Thyroid gland (tissue), 4 donors: ENCODE measurements at regions of chr18 and their contacts with region 1.

Region 1: DNA sequence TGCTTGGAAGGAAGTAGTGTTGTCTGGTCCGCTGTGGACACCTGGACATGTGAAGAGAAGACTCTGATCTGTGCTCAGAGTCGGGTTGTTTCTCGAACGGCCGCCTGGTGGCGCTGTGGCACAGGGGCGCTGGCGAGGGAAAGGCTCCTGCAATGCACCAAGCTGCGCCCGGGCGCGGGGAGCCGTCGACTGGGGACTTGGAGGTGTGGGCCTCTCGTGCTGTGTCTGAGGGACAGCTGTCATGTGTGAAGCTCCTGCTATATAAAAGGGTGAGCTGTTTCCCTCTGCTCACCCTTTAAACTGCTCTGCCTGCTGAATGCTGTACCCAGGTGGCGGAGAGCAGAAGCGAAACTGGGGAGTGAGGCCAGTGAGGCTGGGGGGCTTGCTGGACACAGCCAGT is 44.0 kb downstream of the GNAL start:
- DNase-seq: peak; percentile 73 to 79
- H3K4me3 ChIP-seq: no peak overlapping the region
- H3K27ac ChIP-seq: no peak overlapping the region
- H3K4me1 ChIP-seq: no peaks in the 10 kb centered on the region
- H3K27me3 ChIP-seq: no peaks in the 10 kb centered on the region
- CTCF ChIP-seq: peak; percentile 72 to 91 (median 84)
- POLR2A ChIP-seq: no peak

Region 2: DNA sequence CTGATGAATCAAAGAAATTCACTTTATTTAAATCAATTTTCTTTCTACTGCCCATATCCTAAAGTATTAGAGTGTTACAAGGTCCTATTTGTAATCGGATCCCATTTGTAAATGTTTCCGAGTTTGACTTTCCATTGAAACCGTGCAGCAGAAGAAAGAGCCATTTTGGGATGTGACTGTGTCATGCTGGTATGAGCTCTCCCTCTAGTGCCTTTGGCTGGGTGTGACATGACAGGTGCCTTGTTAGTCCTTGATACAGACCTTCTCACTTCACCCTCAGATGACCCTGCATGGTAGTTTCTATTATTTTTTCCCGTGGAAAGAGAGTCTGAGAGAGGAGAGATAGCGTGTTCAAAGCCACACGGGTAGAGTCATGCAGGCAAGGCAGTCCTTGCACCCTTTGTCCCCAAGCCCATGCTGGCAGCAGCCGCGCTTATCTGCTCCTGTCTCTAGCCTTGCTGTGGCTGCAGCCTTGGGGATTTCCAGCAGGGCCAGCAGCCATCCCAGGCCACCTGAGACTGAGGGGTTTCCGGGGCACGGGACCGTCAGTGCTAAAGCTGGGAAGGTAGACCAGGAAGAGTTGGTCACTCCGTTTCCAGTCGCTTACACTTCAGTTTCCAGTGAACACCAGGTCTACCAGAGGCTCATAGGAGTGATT is 139.6 kb after region 1 on chr18:
- intact Hi-C with region 1: loop called (anchors 10 kb)
- DNase-seq: peak; percentile 38 to 53
- H3K4me3 ChIP-seq: no peak overlapping the region
- H3K27ac ChIP-seq: no peak overlapping the region
- H3K4me1 ChIP-seq: no peaks in the 10 kb centered on the region
- H3K27me3 ChIP-seq: no peaks in the 10 kb centered on the region
- CTCF ChIP-seq: peak in 4 of 6 experiments; percentile 42 to 64 (median 56)
- POLR2A ChIP-seq: no peak

Region 3: DNA sequence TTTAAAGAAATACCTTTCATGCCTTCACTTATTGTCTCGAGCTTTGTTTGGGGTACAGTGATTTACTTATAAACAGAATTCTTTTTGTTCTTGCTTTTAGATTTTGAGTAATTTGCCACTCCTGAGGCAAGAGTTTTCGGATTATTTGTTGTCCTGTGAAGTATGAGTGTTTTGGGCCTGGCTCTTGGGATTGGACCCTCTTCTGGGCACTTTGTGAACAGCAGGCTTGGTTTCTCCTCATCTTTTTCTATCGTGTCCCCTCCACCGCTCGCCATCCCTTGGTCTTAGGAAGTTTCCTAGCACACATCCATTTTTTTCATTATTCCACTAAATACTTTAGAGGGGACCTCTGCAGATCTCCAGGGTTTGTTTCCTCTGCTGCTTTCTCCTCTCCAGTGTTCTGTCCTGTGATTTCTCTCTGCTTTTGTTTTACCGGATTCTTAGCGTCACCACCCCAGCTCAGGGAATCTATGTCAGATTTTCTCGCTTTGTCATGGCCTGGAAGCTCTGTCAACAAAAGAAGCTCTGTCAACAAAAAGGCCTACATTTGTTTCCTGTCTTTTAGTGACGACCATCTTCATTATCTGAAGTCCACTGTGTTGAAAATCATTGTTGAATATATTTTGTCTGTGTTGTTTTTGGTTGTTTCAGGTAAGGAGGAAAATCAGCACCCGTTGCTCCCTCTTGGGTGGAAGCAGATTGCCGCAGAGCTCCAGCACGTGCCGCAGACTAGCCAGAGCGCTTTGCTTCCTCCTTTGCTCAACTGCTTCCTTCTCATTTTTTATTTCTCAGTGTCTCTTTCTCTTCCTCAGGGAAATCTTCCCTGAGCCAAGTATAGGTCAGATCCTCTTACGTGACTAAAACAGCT is 388.4 kb after region 1 on chr18:
- intact Hi-C with region 1: no loop called
- DNase-seq: peak in 1 of 2 donors; percentile 13
- H3K4me3 ChIP-seq: no peak overlapping the region
- H3K27ac ChIP-seq: no peak overlapping the region
- H3K4me1 ChIP-seq: no peaks in the 10 kb centered on the region
- H3K27me3 ChIP-seq: no peaks in the 10 kb centered on the region
- CTCF ChIP-seq: peak in 3 of 6 experiments; percentile 18 to 37 (median 29)
- POLR2A ChIP-seq: no peak

Region 4: GRCh38 chr18:12336875-12337274 is 603.8 kb after region 1 on chr18:
- intact Hi-C with region 1: no loop called
- DNase-seq: no peak
- H3K4me3 ChIP-seq: no peak overlapping the region
- H3K27ac ChIP-seq: peak overlapping the region in 1 of 3 donors; percentile 8
- H3K4me1 ChIP-seq: peaks cover 15 to 33% of the 10 kb centered on the region in 2 donors
- H3K27me3 ChIP-seq: no peaks in the 10 kb centered on the region
- CTCF ChIP-seq: no peak
- POLR2A ChIP-seq: no peak